Activated CD4-positive, alpha-beta T cell treated with anti-CD3 and anti-CD28 coated beads, Interleukin-2, amount 10 ng/mL, durations not matched to agents 24 days and 14 days (primary cell): ENCODE measurements at regions of chr21 and their contacts with region 1.

Region 1: DNA sequence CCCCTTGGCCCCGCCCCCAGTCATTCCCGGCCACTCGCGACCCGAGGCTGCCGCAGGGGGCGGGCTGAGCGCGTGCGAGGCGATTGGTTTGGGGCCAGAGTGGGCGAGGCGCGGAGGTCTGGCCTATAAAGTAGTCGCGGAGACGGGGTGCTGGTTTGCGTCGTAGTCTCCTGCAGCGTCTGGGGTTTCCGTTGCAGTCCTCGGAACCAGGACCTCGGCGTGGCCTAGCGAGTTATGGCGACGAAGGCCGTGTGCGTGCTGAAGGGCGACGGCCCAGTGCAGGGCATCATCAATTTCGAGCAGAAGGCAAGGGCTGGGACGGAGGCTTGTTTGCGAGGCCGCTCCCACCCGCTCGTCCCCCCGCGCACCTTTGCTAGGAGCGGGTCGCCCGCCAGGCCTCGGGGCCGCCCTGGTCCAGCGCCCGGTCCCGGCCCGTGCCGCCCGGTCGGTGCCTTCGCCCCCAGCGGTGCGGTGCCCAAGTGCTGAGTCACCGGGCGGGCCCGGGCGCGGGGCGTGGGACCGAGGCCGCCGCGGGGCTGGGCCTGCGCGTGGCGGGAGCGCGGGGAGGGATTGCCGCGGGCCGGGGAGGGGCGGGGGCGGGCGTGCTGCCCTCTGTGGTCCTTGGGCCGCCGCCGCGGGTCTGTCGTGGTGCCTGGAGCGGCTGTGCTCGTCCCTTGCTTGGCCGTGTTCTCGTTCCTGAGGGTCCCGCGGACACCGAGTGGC is at the start of gene SOD1:
- DNase-seq: peak; percentile 99
- H3K4me3 Mint-ChIP-seq: peak within 1 kb of the TSS; percentile 96
- H3K27ac Mint-ChIP-seq: peak within 1 kb of the TSS; percentile 100
- H3K4me1 Mint-ChIP-seq: peaks cover 63% of the 10 kb centered on the region
- H3K27me3 Mint-ChIP-seq: no peaks in the 10 kb centered on the region
- total RNA-seq, gene SOD1: 336 and 342 TPM in 2 replicates

Region 2: DNA sequence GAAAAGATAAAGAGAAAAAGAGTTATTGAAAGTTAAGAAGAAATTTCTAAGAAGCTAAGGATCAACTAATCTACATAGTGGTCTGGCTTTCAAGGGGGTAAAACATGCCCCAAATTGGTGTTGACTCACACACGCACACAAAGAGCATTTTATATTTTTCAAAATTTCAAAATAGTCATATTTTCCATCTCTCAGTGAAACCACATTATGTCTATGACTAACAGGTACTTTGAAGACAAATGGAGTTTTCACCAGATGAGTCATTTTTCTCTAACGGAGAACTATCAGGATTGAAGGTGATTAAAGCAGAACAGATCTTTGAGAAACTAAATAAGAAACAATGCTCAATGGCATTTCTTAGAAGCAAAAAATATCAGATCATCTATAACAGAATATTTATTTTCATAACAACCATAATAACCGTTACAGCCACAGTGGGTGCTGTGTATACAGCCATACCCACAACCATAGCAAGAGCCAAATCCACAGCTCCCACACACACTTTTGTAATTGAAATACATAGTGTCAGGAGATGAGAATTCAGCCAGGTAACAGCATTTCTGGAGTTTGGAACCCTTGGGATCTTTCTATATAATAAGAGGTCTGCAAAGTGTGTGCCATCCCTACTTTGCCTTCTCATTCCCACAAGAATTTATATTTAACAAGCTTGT is 941.3 kb before region 1 on chr21 and contains the start of gene KRTAP21-3:
- intact Hi-C with region 1: loop called (anchors 2 kb)
- DNase-seq: peak; percentile 67
- H3K4me3 Mint-ChIP-seq: peak within 1 kb of the TSS; percentile 62
- H3K27ac Mint-ChIP-seq: peak within 1 kb of the TSS; percentile 68
- H3K4me1 Mint-ChIP-seq: peaks cover 31% of the 10 kb centered on the region
- H3K27me3 Mint-ChIP-seq: peaks cover 2% of the 10 kb centered on the region
- total RNA-seq, gene KRTAP21-3: not detected in 2 replicates

Region 3: DNA sequence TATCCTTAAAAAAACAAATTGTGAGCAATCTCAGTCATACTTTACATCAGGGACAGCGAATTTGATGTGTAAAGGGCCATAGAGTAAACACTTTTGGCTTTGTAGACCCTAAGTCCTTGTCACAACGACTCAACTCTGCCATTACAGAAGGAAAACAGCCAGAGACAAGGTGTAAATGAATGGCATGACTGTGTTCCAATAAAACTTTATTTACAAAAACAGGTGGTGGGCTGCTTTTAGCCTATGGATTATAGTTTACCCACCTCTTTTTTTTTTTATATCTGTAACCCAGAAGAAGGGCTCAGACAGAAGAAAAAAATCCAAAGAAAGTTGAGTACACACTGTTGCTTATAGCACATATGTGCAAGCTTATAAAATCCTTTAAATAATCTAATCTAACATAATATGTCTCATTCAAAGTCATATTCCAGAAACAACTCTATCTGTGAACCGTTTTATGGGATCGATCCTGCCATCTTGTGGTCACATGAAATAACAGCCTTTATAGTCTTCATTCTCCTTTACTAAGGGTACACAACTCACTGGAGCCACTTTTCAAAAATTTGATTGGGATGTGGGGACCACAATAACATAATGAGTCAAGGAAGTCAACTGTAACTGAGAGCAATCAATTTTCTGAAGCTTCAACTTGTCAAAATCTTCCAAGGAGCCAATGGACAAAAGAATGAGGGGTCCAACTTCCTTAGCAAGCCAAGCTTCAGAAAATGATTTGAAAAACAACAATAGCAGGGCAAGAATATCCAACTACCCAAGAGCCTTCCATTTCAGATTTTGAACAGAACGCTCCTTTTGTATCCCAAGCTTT is 479.2 kb before region 1 on chr21:
- intact Hi-C with region 1: loop called (anchors 1 kb)
- DNase-seq: peak; percentile 77
- H3K4me3 Mint-ChIP-seq: peak overlapping the region; percentile 91
- H3K27ac Mint-ChIP-seq: peak overlapping the region; percentile 96
- H3K4me1 Mint-ChIP-seq: peaks cover 58% of the 10 kb centered on the region
- H3K27me3 Mint-ChIP-seq: no peaks in the 10 kb centered on the region

Region 4: DNA sequence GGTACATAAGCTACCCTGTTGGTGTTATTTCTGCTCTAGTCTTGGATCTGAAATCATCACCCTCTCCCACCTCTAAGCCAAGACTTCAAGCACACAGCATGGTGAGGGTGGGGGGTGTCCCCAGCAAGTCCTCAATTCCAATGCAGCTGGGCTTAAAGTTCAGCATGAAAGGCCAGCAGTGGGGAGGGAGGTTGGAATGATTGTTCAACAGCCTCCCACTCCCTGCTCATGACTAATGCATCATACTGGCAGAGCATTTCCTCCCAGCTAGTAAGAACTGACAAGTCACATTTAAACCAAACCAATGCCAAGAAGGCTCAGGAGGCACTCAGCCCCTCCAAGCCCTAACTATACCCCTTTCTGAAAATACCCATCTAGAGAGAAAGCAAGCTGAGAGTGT is 365.7 kb before region 1 on chr21:
- intact Hi-C with region 1: loop called (anchors 1 kb)
- DNase-seq: peak; percentile 58
- H3K4me3 Mint-ChIP-seq: peak overlapping the region; percentile 54
- H3K27ac Mint-ChIP-seq: peak overlapping the region; percentile 87
- H3K4me1 Mint-ChIP-seq: peaks cover 44% of the 10 kb centered on the region
- H3K27me3 Mint-ChIP-seq: no peaks in the 10 kb centered on the region

Region 5: DNA sequence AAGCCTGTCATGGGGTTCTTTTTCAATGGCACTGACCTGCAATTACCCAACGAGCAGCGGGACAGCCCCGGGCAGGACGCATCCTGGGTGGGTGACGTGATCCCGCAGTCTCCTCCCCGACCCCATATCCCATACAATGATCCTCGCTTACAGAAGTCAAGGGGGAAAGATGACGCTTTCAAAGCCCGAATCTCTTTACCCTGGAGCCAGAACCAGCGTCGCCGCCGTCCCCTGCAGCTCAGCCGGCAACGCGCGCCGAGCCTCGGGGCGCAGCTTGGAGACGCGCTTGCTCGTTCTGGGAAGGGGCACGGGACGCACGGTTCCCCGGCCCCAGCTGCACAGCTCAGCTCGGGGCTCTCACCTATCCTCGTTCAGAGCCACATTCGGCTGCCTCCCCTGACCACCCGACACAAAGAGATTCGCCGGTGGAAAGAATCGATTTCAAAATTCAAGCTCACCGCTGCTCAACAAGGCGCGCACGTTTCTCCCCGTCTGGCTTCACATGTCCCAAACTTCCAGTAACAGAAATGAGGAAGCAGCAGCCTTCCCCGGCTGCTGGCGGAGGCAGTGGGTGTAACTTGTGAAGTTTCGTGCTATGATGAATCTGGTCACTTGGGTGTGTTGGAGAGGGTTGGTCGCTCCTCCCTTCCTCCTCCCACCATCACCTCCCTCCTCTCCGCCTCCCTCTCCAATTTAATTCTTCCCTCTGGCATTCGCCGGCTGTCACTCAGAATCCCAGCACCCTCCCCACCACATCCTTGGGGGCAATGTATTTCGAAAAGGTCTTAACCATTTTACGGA is 315.8 kb before region 1 on chr21 and contains the start of gene TIAM1:
- intact Hi-C with region 1: loop called (anchors 5 kb)
- DNase-seq: peak; percentile 75
- H3K4me3 Mint-ChIP-seq: peak within 1 kb of the TSS; percentile 97
- H3K27ac Mint-ChIP-seq: peak within 1 kb of the TSS; percentile 90
- H3K4me1 Mint-ChIP-seq: peaks cover 67% of the 10 kb centered on the region
- H3K27me3 Mint-ChIP-seq: peaks cover 17% of the 10 kb centered on the region
- total RNA-seq, gene TIAM1: 104 and 105 TPM in 2 replicates

Region 6: DNA sequence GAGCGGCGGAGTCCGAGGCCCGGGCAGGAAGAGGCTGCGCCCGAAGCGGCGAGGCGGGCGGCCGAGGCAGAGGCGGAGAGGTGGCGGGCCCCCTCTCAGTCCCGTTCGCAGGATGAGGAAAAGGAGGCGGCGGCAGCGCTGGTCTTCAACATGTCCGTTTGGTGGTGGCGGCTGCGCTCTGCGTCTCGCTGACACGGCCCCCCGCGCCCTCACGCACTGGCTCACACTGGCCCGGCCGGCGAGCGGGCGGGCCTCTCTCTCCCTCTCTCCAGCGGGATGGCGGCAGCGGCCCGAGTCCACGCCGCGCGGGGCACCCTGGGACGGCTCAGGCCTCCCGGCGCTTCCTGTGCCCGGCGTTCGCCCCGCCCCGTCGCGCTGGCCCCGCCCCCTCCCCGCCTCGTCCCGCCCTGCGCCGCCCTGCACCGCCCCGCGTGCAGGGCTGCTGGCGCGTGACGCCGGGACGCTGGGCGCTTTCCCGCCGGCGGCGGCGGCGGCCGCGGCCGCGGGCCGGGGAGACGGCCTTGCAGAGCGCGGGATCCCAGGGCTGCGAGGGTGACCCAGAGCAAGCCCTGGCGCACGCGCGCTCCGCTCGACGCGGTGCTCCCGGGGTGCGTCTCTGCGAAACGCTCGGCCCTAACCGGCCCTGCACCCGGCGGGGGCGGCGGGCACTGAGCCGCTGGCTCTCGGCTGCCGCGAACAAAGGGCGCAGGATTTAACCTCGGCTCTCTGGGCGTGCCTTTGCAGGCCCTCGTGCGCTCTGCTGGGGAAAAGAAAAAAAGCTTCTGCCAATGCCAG is 72.3 kb after region 1 on chr21 and contains the start of gene SCAF4:
- intact Hi-C with region 1: loop called (anchors 1 kb)
- DNase-seq: peak; percentile 94
- H3K4me3 Mint-ChIP-seq: peak within 1 kb of the TSS; percentile 90
- H3K27ac Mint-ChIP-seq: peak within 1 kb of the TSS; percentile 82
- H3K4me1 Mint-ChIP-seq: peaks cover 9% of the 10 kb centered on the region
- H3K27me3 Mint-ChIP-seq: no peaks in the 10 kb centered on the region
- total RNA-seq, gene SCAF4: 65.4 and 65.7 TPM in 2 replicates

Region 7: GRCh38 chr21:32278518-32279376 is 619.0 kb after region 1 on chr21 and contains the start of gene MIS18A:
- intact Hi-C with region 1: loop called (anchors 10 kb)
- DNase-seq: peak; percentile 99
- H3K4me3 Mint-ChIP-seq: peak within 1 kb of the TSS; percentile 100
- H3K27ac Mint-ChIP-seq: peak within 1 kb of the TSS; percentile 98
- H3K4me1 Mint-ChIP-seq: peaks cover 32% of the 10 kb centered on the region
- H3K27me3 Mint-ChIP-seq: peaks cover 3% of the 10 kb centered on the region
- total RNA-seq, gene MIS18A: 27.8 and 31.3 TPM in 2 replicates